Mammary epithelial cell (primary cell): ENCODE measurements at regions of chr9 and their contacts with region 1.

Region 1: DNA sequence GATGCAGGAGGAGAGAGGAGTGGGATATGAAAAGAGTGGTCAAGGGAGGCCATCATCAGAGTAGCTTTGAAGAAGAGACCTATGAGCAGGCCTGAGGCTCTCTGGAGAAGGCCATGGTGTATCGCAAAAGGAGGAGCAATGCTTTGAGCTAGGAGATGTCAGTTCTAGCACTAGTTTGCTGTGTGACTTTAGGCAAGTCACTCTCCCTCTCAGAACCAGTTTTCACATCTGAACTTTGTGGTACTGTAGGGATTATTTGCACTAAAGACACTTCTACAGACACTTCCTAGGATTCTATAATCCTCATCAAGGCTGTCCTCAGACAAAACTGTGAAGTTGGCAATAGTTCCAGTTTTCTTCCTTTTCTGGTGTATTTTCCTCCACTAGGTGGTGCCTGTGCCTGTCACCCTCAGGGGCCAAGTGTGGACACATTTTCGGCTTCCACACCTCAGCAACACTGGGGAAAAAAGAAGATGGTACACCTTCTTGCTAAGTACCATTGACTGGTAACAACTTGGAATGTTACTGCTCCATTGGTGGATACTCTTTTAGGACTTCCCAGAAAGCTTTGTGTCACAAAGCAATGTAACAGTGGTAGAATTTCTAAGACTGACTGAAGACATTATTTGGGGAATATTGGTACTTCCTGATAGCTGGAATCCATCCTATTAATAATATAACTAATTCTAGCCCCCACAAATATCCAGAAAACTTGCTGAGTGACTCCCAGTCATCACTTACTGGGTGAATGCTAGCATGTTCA is 9.9 kb downstream of the PAPPA start:
- DNase-seq: no peak
- H3K4me3 ChIP-seq: no peak overlapping the region
- H3K27ac ChIP-seq: no peak overlapping the region
- H3K4me1 ChIP-seq: no peaks in the 10 kb centered on the region
- H3K27me3 ChIP-seq: no peaks in the 10 kb centered on the region
- CTCF ChIP-seq: peak; percentile 52

Region 2: GRCh38 chr9:115524453-115525059 is 638.9 kb before region 1 on chr9:
- CTCF ChIA-PET with region 1: no interaction called
- dilution Hi-C with region 1: no loop called
- in situ Hi-C with region 1: no loop called
- intact Hi-C with region 1: no loop called
- DNase-seq: peak; percentile 60
- H3K4me3 ChIP-seq: no peak overlapping the region
- H3K27ac ChIP-seq: no peak overlapping the region
- H3K4me1 ChIP-seq: no peaks in the 10 kb centered on the region
- H3K27me3 ChIP-seq: no peaks in the 10 kb centered on the region
- CTCF ChIP-seq: peak; percentile 69 to 80

Region 3: GRCh38 chr9:116124461-116125090 is 38.9 kb before region 1 on chr9:
- CTCF ChIA-PET with region 1: no interaction called
- dilution Hi-C with region 1: loop called (anchors 5 kb)
- in situ Hi-C with region 1: no loop called
- intact Hi-C with region 1: no loop called
- DNase-seq: peak; percentile 62
- H3K4me3 ChIP-seq: no peak overlapping the region
- H3K27ac ChIP-seq: no peak overlapping the region
- H3K4me1 ChIP-seq: peaks cover 7% of the 10 kb centered on the region
- H3K27me3 ChIP-seq: no peaks in the 10 kb centered on the region
- CTCF ChIP-seq: no peak

Region 4: DNA sequence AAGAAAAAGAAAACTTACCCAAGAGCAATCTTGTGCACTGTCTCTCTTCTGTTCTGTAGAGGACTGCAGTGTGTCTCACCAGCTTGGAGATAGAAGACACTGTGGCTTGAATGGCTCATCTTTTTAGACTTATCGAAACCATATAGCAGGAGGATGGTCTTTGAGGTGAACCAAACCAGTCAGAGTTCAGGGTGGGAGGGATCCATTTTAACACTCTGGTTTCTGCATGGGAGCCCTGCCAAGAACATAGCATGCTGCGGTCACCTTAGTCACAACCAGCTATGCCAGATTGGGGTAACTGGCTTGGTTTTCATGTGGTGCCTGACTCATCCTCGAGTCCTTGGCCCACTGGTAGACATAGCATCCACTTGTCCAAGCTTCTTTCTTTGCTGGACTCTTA is 125.2 kb after region 1 on chr9:
- CTCF ChIA-PET with region 1: no interaction called
- dilution Hi-C with region 1: no loop called
- in situ Hi-C with region 1: no loop called
- intact Hi-C with region 1: loop called (anchors 10 kb)
- DNase-seq: peak; percentile 96
- H3K4me3 ChIP-seq: no peak overlapping the region
- H3K27ac ChIP-seq: no peak overlapping the region
- H3K4me1 ChIP-seq: no peaks in the 10 kb centered on the region
- H3K27me3 ChIP-seq: peaks cover 12% of the 10 kb centered on the region
- CTCF ChIP-seq: no peak